ENCODE measurements at regions of chr1 and their contacts with region 1.

Region 1: DNA sequence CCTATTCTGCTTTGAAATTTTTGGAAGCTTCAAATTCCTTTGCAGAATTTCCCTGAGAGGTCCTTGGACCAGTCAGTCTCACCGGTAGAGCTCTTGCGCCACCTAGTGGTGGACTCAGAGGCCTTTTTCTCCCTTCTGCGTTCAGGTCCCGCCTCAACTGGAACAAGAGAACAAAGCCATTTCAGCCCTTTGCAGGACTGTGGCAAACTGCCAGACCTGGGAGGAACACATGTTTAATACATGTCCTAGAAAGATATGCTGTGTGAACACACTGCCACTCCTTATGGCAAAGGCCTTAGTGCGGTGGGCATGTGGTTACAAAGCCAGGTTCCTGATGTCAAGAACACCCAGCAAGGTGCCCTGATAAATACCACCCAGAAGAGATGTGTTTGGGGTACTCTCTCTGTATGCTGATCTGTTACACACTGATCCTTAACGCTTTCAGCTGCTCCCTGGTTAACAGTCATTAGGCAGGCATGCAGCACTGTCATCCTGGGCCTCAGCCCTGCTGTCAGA is 82.2 kb upstream of the SSX2IP start:
- DNase-seq: peak; percentile 75
- CTCF ChIP-seq: peak; percentile 87

Region 2: DNA sequence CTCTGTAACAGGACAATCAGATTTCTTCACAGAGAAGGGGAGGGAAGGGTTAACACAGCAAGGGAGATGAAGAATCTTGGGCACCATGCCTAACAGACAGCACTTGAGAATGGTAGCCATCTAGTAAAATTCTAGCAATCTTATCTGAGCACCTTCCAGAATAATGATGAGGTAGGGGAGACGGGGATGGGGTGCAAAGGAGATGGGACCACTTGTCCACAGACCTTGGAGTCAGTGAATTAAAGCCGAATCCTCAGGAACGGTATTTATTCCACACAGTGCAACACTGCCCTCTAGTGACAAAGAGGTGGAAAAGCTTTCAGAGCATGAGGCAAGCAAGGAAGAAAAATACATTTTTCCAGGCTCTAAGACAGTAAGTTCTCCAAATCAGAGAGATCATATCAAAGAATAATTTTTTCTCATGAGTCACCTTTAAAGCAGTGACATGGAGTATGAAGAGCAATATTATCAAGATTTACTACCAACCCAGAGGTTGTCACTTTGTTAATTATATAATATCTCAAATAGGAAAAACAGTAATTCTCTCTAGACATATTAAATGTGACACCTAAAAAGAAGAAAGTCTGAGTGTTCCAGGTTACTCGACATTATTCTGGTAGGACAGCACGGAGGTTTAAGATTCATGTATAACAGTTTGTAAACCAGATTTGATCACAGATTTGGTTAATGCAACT is 163.8 kb after region 1 on chr1:
- in situ Hi-C with region 1: loop called (anchors 10 kb)
- DNase-seq: peak; percentile 42
- CTCF ChIP-seq: peak; percentile 88

Region 3: GRCh38 chr1:85049735-85050166 is 277.3 kb after region 1 on chr1:
- in situ Hi-C with region 1: no loop called
- DNase-seq: no peak
- CTCF ChIP-seq: no peak

Measured in GM13976 (cell line).